Activated T-helper 2 cell treated with anti-CD3 and anti-CD28 coated beads, Interferon-gamma antibody, Interleukin-2, Interleukin-4, amounts not matched to agents 10 μg/mL and 5 μg/mL and 100 μg/mL, durations not matched to agents 14 hours and 24 hours and 36 hours (primary cell): ENCODE measurements at regions of chr17 and their contacts with region 1.

Region 1: DNA sequence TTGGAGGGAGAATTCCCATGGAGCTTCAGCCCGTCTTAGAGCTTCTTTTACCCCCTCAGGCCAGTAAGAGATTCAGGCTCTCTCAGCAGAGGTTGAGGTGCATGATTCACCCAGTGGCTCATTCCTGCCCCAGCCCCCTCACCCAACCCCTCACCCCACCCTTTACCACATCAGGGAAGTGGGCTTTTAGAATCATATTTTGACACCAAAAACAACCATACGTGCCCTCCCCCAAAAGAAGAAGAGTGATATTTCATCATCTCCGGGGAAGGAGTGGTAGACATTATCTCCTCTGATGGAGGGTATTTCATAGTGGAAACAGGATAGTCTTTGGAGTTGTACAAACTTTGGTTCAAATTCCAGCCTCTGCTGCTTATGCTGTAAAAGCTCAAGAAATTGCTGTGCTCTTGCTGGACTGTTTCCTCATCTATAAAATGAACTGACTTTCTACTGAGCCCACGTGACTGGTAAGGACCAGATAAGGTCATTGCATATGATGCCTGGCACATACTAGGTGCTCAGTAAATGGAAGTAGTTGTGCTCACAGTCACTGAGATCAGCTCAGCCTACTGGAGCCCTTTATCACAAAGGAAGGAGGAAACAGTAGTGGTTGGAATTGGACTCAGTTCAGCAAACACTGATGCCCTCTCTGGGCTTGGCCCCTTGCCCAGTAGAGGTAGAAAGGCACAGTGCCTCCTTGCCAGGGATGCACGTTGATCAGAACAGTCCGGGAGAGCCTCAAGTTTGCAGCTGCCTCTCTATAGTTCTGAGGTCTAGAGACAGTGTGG is 18.3 kb upstream of the CCL5 start:
- DNase-seq: no peak
- H3K4me3 Mint-ChIP-seq: no peak overlapping the region
- H3K27ac Mint-ChIP-seq: peak overlapping the region; percentile 65
- H3K4me1 Mint-ChIP-seq: peaks cover 53% of the 10 kb centered on the region
- H3K27me3 Mint-ChIP-seq: no peaks in the 10 kb centered on the region

Region 2: DNA sequence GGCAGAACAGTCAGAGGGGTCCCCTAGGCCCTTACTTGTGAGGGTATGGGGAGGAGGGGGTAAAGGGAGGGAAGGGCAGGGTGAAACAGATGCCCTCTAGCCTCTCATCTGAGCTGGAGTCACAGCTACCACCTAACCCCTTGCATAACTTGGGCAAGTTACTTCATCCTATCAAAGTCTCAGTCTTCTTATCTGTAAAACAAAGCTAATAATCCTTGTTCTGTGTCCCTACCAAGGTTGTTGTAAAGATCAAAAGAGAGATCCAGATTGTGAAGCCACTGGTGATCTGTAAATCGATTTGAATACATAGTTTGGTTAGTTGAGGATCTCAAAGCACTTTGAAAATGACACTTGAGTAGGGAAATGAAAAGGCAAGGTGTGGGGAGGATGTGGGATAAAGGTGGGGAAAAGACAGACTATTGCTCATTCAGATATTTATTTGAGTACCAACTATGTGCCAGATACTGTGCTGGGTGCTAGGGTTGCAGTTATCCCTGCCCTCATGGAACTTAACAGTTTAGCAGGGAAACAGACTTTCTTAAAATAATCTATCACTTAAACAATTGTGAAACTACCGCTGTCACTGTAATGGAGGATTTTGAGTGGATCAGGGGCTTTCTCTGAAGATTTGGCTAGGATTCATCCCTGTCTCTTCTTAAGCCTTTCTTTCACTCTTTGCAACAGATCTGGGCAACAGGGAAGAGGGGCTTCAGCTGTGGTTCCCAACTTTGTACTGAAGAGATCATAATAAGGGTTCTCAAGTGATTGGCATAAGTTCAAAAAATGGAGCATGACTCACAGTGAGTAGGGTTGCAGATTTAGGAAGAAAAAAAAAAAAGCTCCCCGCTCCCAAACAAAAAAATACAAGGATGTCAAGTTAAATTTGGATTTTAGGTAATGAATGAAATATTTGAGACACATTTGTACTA is 32.8 kb before region 1 on chr17:
- intact Hi-C with region 1: no loop called
- DNase-seq: no peak
- H3K4me3 Mint-ChIP-seq: no peak overlapping the region
- H3K27ac Mint-ChIP-seq: no peak overlapping the region
- H3K4me1 Mint-ChIP-seq: peaks cover 16% of the 10 kb centered on the region
- H3K27me3 Mint-ChIP-seq: no peaks in the 10 kb centered on the region

Region 3: DNA sequence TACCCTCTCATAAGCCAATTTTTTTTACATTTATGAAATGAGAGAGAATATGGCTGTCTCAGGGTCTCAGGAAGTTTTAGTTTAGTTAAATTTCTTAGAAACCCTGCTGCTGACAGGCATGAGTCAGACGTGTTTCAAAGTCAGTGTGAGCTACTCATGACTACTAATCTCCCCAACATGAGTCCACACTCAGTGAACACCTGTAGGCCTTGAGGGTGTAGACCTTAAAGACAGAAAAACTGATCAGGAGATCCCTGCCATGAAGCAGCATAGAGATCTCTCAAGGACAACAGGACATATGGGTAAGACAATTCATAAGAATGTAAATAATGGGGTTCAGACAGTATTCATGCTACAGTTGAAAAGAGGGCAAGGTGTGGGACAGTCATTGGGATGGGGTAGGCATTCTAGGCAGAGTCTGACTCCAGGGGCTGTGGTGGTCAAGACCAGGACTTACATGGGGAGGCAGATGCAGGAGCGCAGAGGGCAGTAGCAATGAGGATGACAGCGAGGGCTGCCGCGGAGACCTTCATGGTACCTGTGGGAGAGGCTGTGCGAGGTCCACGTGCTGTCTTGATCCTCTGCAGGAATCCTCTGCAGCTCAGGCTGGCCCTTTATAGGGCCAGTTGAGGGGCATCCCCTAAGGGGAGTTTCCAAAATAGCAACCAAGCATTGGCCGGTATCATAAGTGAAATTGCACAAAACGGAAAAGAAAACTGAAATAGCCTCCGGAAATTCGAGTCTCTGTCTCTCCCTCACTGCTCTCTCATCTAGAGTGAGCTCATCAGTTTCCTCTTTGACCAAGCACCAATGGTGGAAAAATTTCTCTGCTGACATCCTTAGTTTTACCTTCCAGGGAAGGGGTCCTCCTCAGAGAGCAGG is 18.5 kb before region 1 on chr17 and contains the start of gene CCL5:
- intact Hi-C with region 1: loop called (anchors 1 kb)
- DNase-seq: peak; percentile 59
- H3K4me3 Mint-ChIP-seq: peak within 1 kb of the TSS; percentile 76
- H3K27ac Mint-ChIP-seq: peak within 1 kb of the TSS; percentile 97
- H3K4me1 Mint-ChIP-seq: peaks cover 49% of the 10 kb centered on the region
- H3K27me3 Mint-ChIP-seq: no peaks in the 10 kb centered on the region
- total RNA-seq, gene CCL5: 28.1 and 28.9 TPM in 2 replicates

Region 4: GRCh38 chr17:35930211-35931065 is 32.0 kb after region 1 on chr17 and contains the start of gene RDM1:
- intact Hi-C with region 1: loop called (anchors 1 kb)
- DNase-seq: peak; percentile 89
- H3K4me3 Mint-ChIP-seq: peak within 1 kb of the TSS; percentile 84
- H3K27ac Mint-ChIP-seq: peak within 1 kb of the TSS; percentile 84
- H3K4me1 Mint-ChIP-seq: peaks cover 25% of the 10 kb centered on the region
- H3K27me3 Mint-ChIP-seq: peaks cover 5% of the 10 kb centered on the region
- total RNA-seq, gene RDM1: 4.5 and 5.3 TPM in 2 replicates

Region 5: DNA sequence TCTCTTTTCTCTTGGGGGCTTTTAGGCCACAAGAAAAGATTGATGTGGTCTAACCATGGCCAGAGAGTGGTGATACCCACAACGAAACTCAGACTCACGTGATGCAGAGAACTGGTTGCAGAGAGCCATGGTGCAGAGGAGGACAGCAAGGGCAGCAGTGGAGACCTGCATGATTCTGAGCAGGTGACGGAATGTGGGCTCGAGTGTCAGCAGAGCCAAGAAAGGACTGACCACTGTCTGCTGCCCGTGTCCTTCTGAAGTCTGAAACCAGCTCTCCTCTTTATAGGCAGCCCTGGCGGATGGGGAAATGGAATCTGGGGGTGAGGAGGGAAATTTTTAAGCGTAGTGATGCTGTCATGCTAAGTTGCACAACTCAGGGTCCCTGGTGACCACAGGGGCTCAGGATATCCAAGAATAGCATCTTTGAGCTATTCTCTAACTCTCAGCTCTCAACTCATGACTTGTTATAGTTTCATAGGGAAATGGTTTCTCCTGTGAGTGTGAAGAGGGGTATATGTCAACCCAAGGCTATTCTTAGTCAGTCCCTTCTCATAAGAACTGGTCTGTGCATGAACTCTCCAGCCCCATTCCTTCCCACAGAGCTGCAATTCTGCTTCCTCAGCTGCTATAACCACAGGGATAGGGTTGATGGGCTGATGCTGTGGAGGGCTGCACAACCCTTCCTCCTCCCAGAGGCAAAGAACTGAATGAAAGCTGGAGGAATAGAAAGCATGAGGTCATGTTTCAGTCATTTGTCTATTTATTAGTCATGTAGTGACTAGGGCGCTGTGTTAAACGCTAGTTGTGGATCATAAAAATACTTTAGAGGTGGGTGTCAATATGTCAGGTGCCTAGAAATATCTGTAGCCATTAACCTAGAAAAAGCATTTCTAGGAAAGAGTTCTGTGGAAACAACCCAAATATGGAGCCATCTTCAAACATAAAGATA is 191.7 kb after region 1 on chr17 and contains the start of gene CCL3:
- intact Hi-C with region 1: loop called (anchors 5 kb)
- DNase-seq: no peak
- H3K4me3 Mint-ChIP-seq: peak within 1 kb of the TSS; percentile 56
- H3K27ac Mint-ChIP-seq: peak within 1 kb of the TSS; percentile 85
- H3K4me1 Mint-ChIP-seq: peaks cover 43% of the 10 kb centered on the region
- H3K27me3 Mint-ChIP-seq: peaks cover 25% of the 10 kb centered on the region
- total RNA-seq, gene CCL3: 218 and 222 TPM in 2 replicates